Adrenal gland (tissue), 19 donors: ENCODE measurements at regions of chr20 and their contacts with region 1.

Region 1: GRCh38 chr20:19995220-19995863 is 21.8 kb upstream of the NAA20 start:
- DNase-seq: peak in 3 of 7 donors; percentile 46 to 61 (median 59)
- H3K4me3 ChIP-seq: no peak overlapping the region
- H3K27ac ChIP-seq: no peak overlapping the region
- H3K4me1 ChIP-seq: peaks cover 33 to 72% of the 10 kb centered on the region in 2 donors
- H3K27me3 ChIP-seq: no peaks in the 10 kb centered on the region
- CTCF ChIP-seq: peak; percentile 73 to 85 (median 83)
- POLR2A ChIP-seq: no peak

Region 2: GRCh38 chr20:19784511-19785172 is 210.7 kb before region 1 on chr20:
- intact Hi-C with region 1: loop called (anchors 5 kb)
- DNase-seq: peak; percentile 47 to 81 (median 67)
- H3K4me3 ChIP-seq: no peak overlapping the region
- H3K27ac ChIP-seq: no peak overlapping the region
- H3K4me1 ChIP-seq: peaks cover 3 to 27% of the 10 kb centered on the region in 2 donors
- H3K27me3 ChIP-seq: no peaks in the 10 kb centered on the region
- CTCF ChIP-seq: peak; percentile 67 to 92 (median 84)
- POLR2A ChIP-seq: no peak

Region 3: DNA sequence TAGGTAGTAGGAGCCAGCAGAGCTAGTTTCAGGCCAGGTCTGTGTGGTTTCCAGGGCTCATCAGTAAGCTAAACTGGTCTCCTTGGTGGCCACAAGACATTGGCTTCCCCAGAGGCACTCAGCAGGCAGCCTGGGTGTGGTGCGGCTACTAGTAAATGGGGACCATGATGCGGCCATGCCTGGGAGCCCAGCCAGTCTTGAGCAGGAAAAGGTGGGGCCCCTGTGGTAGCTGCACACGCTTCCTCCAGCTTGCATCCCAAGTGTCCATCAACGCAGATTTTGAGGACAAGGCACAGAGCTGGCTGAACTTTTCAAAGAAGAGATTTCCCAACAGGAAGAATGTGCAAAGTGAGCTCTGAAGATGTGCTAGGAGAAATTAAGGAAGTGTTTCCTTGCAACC is 85.6 kb before region 1 on chr20:
- intact Hi-C with region 1: no loop called
- DNase-seq: peak; percentile 36 to 80 (median 66)
- H3K4me3 ChIP-seq: no peak overlapping the region
- H3K27ac ChIP-seq: peak overlapping the region in 1 of 5 donors; percentile 57
- H3K4me1 ChIP-seq: no peaks in the 10 kb centered on the region
- H3K27me3 ChIP-seq: no peaks in the 10 kb centered on the region
- CTCF ChIP-seq: no peak
- POLR2A ChIP-seq: no peak

Region 4: GRCh38 chr20:19921284-19921793 is 74.0 kb before region 1 on chr20:
- intact Hi-C with region 1: loop called in 1 of 2 experiments (anchors 10 kb)
- DNase-seq: peak in 6 of 7 donors; percentile 33 to 77 (median 56)
- H3K4me3 ChIP-seq: no peak overlapping the region
- H3K27ac ChIP-seq: peak overlapping the region in 4 of 5 donors; percentile 12 to 34 (median 20)
- H3K4me1 ChIP-seq: peaks cover 9 to 28% of the 10 kb centered on the region in 2 donors
- H3K27me3 ChIP-seq: no peaks in the 10 kb centered on the region
- CTCF ChIP-seq: no peak
- POLR2A ChIP-seq: no peak

Region 5: DNA sequence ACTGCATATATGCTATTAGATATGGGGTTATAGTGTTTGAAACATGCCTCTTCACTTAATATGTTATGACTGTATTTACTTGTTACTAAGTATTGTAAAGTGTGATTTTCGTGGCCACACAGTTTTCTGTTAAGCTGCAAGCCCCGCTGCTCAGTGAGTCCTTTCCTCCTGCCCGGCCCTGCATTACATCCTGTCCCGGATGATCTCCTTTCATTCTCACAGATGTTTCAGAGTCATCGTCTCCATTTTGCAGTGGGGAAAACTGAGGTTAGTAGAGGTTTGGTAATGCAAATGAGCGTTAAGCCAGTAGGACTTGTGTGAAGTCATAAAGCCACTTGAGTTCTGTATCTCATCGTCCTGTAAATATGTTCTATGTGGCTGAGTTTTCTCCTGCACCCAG is 212.5 kb after region 1 on chr20:
- intact Hi-C with region 1: no loop called
- DNase-seq: no peak
- H3K4me3 ChIP-seq: no peak overlapping the region
- H3K27ac ChIP-seq: no peak overlapping the region
- H3K4me1 ChIP-seq: no peaks in the 10 kb centered on the region
- H3K27me3 ChIP-seq: no peaks in the 10 kb centered on the region
- CTCF ChIP-seq: no peak
- POLR2A ChIP-seq: no peak